Activated CD8-positive, alpha-beta T cell treated with anti-CD3 and anti-CD28 coated beads for 36 hours (primary cell): ENCODE measurements at regions of chr14 and their contacts with region 1.

Region 1: DNA sequence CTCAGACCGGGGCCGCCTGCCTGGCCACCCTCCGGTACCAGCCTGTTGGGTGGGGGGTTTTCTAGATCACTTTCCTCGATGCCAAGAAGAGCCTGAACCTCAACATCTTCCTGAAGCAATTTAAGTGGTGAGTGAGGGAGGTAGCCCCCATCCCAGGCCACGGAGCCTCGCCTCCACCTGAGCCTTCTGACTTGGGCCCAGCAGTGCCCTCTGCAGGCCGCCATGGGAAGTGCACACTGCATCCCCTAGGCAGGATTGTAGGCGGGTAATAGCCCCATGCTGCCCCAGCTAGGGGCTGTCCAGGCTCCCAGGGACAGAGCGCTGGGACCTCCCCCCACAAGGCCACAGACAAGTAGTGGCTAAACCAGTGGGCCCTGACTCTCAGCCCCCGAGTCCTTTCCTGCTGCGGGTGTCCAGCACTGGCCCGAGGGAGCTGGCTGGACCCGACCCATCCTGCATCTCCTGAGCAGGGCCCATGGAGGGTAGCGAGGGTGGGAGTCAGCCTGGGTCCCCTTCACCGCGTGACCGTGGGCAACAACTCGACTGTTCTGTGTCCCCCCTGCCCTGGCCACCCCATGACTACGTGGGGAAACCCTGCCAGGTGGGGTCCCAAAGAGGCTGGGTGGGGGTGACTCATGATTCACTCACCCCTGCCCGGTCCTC is 15.3 kb upstream of the ADSS1 start:
- DNase-seq: peak; percentile 85
- ATAC-seq: peak; percentile 94
- H3K4me3 Mint-ChIP-seq: no peak overlapping the region
- H3K27ac Mint-ChIP-seq: no peak overlapping the region
- H3K4me1 Mint-ChIP-seq: peaks cover 2% of the 10 kb centered on the region
- H3K27me3 Mint-ChIP-seq: no peaks in the 10 kb centered on the region
- CTCF ChIP-seq: peak; percentile 97

Region 2: DNA sequence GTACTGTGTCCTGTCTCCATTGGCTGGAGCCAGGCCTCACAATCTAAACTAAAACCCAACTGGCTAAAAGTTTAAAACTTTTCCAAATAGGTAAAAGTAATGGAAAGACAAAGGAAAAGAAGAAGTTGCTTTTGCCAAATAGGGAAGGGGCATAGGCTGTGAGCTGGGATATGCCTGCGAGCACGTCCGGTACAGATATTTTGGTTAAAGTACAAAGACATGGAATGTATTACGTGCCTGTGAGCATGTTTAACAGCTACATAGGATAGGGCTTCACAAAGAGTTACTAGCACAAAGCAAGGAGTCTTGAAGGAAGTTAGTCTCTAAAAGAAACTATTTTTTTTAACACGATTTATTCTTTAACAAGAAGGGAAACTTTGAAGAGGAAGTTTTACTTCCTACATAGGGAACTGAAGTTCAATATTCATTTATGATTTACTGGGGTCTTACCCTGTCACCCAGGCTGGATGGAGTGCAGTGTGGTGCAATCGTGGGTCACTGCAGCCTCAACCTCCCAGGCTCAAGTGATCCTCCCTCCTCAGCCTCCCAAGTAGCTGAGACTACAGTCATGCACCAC is 61.2 kb before region 1 on chr14:
- CTCF ChIA-PET with region 1: interaction called, 5 read pairs
- POLR2A ChIA-PET with region 1: no interaction called
- intact Hi-C with region 1: loop called (anchors 5 kb)
- DNase-seq: no peak
- ATAC-seq: no peak
- H3K4me3 Mint-ChIP-seq: no peak overlapping the region
- H3K27ac Mint-ChIP-seq: no peak overlapping the region
- H3K4me1 Mint-ChIP-seq: no peaks in the 10 kb centered on the region
- H3K27me3 Mint-ChIP-seq: peaks cover 5% of the 10 kb centered on the region
- CTCF ChIP-seq: no peak

Region 3: DNA sequence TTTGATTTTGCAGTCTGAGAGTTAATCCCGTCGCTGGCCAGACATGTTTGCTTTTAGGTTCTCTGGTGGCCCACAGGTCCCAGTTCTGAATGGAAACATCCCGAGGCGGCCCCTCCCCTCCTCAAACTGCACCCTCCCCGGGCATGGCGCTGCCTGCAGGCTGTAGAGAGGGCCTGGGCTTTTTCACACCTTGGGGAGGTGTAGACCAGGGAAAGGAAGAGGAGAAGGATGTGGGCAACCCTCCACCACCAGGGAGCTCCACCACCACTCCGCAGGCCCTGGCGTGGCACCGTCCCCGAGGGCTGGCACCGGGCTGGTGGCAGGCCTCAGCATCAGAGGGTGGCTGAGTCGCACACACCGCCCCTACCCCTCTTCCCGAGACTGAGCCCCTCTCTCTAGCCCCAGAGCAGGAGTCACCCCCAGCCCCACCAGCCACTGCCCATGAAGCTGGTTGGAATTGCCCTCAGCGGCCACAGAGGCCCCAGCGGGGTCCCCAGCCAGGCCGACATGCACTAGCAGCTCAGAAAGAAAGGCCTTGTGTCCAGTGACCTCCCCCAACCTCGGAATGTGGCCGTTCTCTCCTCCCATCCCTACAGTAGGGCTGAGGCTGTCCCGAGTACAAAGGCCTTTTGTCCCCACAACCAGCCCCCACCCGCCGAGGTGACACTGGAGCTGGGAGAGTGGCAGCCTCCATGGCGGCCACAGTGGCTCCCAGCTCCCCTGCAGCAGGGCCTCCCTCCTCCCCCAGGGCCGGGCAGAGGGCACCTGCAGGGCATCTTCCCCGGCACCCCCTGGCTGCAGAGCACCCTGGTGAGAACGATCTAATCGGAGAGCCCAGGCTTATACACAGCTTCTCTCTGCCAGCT is 42.8 kb before region 1 on chr14:
- CTCF ChIA-PET with region 1: interaction called, 11 read pairs
- POLR2A ChIA-PET with region 1: interaction called, 3 read pairs
- intact Hi-C with region 1: no loop called
- DNase-seq: peak; percentile 63
- ATAC-seq: peak; percentile 93
- H3K4me3 Mint-ChIP-seq: no peak overlapping the region
- H3K27ac Mint-ChIP-seq: no peak overlapping the region
- H3K4me1 Mint-ChIP-seq: peaks cover 16% of the 10 kb centered on the region
- H3K27me3 Mint-ChIP-seq: peaks cover 6% of the 10 kb centered on the region
- CTCF ChIP-seq: peak; percentile 52

Region 4: DNA sequence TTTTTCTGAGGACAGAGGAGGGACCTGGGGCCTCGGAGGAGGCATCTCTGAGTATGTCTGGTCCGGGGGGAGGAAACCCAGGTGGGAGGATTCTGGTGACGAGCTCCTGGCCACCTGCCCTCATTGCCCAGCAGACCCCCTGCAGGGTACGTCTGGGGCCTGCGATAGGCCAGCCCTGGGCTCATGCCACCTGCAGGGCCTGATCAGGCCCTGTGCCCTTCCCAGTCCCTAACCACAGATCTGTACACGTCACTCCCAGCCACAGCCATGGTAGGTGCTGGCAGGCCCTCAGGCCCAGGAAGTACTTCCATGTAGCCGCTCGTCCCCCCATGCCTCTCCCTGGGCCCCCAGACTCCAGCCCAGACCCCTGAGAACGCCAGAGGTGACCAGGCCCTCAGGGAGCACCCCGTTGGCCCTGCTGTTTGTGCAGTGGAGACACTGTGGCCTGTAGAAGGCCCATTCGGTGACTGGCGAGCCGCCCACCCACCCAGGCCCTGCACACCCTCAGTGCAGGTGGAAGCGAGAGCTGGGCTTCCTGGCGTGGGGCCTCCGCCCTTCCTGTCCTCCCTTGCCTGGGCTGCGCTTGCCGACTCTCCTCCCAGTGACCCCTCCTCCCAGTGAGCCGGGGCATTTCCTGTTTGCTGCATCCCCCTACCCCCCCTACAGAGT is 13.6 kb before region 1 on chr14:
- CTCF ChIA-PET with region 1: interaction called, 16 read pairs
- POLR2A ChIA-PET with region 1: interaction called, 3 read pairs
- intact Hi-C with region 1: no loop called
- DNase-seq: peak; percentile 79
- ATAC-seq: peak; percentile 90
- H3K4me3 Mint-ChIP-seq: peak overlapping the region; percentile 59
- H3K27ac Mint-ChIP-seq: peak overlapping the region; percentile 86
- H3K4me1 Mint-ChIP-seq: peaks cover 34% of the 10 kb centered on the region
- H3K27me3 Mint-ChIP-seq: no peaks in the 10 kb centered on the region
- CTCF ChIP-seq: no peak

Region 5: GRCh38 chr14:104731249-104731924 is 22.6 kb after region 1 on chr14:
- CTCF ChIA-PET with region 1: no interaction called
- POLR2A ChIA-PET with region 1: no interaction called
- intact Hi-C with region 1: no loop called
- DNase-seq: peak; percentile 30
- ATAC-seq: peak; percentile 60
- H3K4me3 Mint-ChIP-seq: no peak overlapping the region
- H3K27ac Mint-ChIP-seq: no peak overlapping the region
- H3K4me1 Mint-ChIP-seq: no peaks in the 10 kb centered on the region
- H3K27me3 Mint-ChIP-seq: no peaks in the 10 kb centered on the region
- CTCF ChIP-seq: no peak